Heart left ventricle (tissue), 16 donors: ENCODE measurements at regions of chr20 and their contacts with region 1.

Region 1: DNA sequence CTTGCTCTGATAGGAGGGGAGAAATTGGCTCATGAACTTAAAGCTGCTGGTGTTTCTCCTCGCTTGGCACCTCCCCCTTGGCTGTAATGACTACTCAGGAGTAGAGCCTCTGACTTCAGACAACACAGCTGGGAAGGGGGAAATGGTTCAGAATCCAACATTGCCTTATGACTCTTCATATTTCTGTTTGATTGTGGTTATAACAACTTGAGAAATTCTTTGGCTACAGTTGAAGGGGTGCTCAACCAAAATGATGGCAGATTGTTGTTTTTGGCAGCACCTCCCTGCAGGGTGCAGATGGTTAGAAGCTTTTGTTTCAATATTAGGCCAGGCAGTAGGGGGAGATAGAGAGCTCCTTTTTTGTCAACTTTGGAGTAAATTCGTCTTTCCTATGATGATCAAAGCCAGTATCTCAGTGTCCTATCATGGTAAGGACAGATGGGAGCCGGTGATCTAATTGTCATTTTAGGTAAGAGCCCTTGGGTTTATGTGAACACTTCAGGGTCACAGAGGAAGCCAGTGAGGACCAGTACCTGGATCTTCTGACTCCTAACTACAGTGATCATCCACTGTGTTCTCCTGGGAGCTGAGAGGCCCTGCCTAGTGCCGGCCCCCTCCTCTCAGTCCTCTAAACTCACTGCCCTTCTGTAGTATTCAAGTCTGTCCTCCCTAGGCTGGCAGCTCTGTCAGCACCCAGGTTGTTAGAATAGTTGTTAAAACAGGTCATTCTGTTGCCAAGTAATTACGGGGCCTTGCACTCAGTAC is 39.9 kb downstream of the RPRD1B start:
- DNase-seq: peak in 4 of 5 donors; percentile 69 to 85 (median 74)
- ATAC-seq: peak; percentile 72 to 88 (median 83)
- H3K4me3 ChIP-seq: no peak overlapping the region
- H3K27ac ChIP-seq: peak overlapping the region; percentile 45 to 90 (median 83)
- H3K4me1 ChIP-seq: peaks cover 22 to 58% (median 40%) of the 10 kb centered on the region in 12 donors
- H3K27me3 ChIP-seq: no peaks in the 10 kb centered on the region
- CTCF ChIP-seq: peak; percentile 72 to 92 (median 80)
- POLR2A ChIP-seq: no peak

Region 2: GRCh38 chr20:38023181-38024001 is 50.1 kb before region 1 on chr20:
- intact Hi-C with region 1: no loop called
- DNase-seq: no peak
- ATAC-seq: peak in 2 of 4 donors; percentile 45 to 49
- H3K4me3 ChIP-seq: no peak overlapping the region
- H3K27ac ChIP-seq: peak overlapping the region in 1 of 12 donors; percentile 77
- H3K4me1 ChIP-seq: peaks cover 0 to 23% (median 2%) of the 10 kb centered on the region in 12 donors
- H3K27me3 ChIP-seq: no peaks in the 10 kb centered on the region
- CTCF ChIP-seq: no peak
- POLR2A ChIP-seq: no peak

Region 3: GRCh38 chr20:38113401-38114325 is 40.2 kb after region 1 on chr20:
- intact Hi-C with region 1: loop called in 7 of 10 experiments (anchors 2 to 5 kb)
- DNase-seq: peak in 1 of 5 donors; percentile 38
- ATAC-seq: no peak
- H3K4me3 ChIP-seq: no peak overlapping the region
- H3K27ac ChIP-seq: peak overlapping the region in 8 of 12 donors; percentile 4 to 62 (median 26)
- H3K4me1 ChIP-seq: peaks cover 13 to 54% (median 42%) of the 10 kb centered on the region in 12 donors
- H3K27me3 ChIP-seq: no peaks in the 10 kb centered on the region
- CTCF ChIP-seq: peak in 9 of 12 donors; percentile 8 to 41 (median 19)
- POLR2A ChIP-seq: no peak

Region 4: GRCh38 chr20:38242848-38243449 is 169.5 kb after region 1 on chr20:
- intact Hi-C with region 1: no loop called
- DNase-seq: no peak
- ATAC-seq: no peak
- H3K4me3 ChIP-seq: no peak overlapping the region
- H3K27ac ChIP-seq: no peak overlapping the region
- H3K4me1 ChIP-seq: peaks cover 0 to 17% (median 3%) of the 10 kb centered on the region in 12 donors
- H3K27me3 ChIP-seq: peaks cover 0 to 4% (median 0%) of the 10 kb centered on the region in 9 donors
- CTCF ChIP-seq: peak in 6 of 12 donors; percentile 21 to 29 (median 24)
- POLR2A ChIP-seq: no peak